ENCODE measurements at regions of chr3 and their contacts with region 1.

Region 1: GRCh38 chr3:354432-354831 is 157.9 kb downstream of the CHL1 start:
- DNase-seq: peak; percentile 64
- ATAC-seq: peak; percentile 59
- H3K4me3 ChIP-seq: no peak overlapping the region
- H3K27ac ChIP-seq: peak overlapping the region; percentile 46
- H3K4me1 ChIP-seq: peaks cover 16% of the 10 kb centered on the region
- H3K27me3 ChIP-seq: no peaks in the 10 kb centered on the region
- CTCF ChIP-seq: peak; percentile 69
- POLR2A ChIP-seq: no peak
- RAD21 ChIP-seq: peak; percentile 74

Region 2: DNA sequence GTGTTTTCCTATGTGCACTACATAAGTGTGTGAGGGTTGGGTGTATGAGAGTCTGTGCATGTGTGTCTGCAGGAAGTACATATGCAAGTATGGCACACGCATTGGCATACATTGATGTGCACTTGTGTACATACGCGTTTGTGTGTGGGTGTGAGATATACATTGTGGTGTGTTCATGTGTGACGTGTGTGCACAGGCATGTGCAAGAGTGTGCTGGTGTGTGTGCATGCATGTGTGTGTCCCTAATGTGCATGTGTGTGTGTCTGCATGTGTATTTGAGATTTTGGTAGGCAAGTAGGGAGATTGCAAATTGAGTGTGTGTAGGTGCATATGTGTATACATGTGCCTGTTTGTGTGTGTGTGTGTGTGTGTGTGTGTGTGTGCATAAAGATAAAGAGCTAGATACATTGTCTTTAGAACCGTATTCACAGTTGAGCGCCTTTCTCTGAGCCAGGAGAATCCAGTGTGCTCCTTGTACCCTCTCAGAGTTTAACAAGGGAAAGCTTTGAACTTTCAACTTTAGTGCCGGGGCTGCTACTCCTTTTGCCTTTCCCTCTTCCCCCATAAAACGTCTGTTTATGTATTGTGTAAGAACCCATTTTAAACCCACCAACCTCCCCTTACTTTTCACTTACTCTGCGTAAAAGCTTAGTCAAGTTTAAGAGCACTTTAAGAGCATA is 310.3 kb before region 1 on chr3:
- CTCF ChIA-PET with region 1: interaction called, 3 read pairs
- POLR2A ChIA-PET with region 1: no interaction called
- dilution Hi-C with region 1: no loop called
- in situ Hi-C with region 1: no loop called
- intact Hi-C with region 1: loop called (anchors 1 kb)
- DNase-seq: no peak
- ATAC-seq: no peak
- H3K4me3 ChIP-seq: no peak overlapping the region
- H3K27ac ChIP-seq: no peak overlapping the region
- H3K4me1 ChIP-seq: no peaks in the 10 kb centered on the region
- H3K27me3 ChIP-seq: no peaks in the 10 kb centered on the region
- CTCF ChIP-seq: no peak
- POLR2A ChIP-seq: no peak
- RAD21 ChIP-seq: no peak

Region 3: GRCh38 chr3:197828-198491 is 156.5 kb before region 1 on chr3:
- CTCF ChIA-PET with region 1: no interaction called
- POLR2A ChIA-PET with region 1: no interaction called
- dilution Hi-C with region 1: no loop called
- in situ Hi-C with region 1: no loop called
- intact Hi-C with region 1: loop called (anchors 1 kb)
- DNase-seq: no peak
- ATAC-seq: peak; percentile 61
- H3K4me3 ChIP-seq: peak overlapping the region; percentile 46
- H3K27ac ChIP-seq: no peak overlapping the region
- H3K4me1 ChIP-seq: no peaks in the 10 kb centered on the region
- H3K27me3 ChIP-seq: peaks cover 15% of the 10 kb centered on the region
- CTCF ChIP-seq: no peak
- POLR2A ChIP-seq: no peak
- RAD21 ChIP-seq: no peak

Region 4: DNA sequence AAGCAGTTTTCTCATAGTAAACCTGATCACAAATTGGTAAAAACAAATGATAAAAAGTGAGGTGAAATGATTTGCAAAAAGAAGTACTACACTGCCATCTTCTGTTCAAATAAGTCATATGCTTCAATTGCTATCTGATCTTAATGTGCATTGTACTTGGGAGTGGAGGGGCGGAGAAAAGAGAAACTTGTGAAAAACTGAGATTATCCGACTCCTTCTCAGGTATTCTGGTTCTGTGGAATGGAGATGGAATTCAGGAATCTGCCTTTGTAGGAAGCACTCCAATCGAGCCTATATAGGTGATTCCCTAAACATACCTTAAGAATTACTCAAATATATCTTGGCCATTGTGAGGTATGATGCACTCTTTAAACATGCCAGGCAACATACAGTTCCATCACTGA is 22.7 kb after region 1 on chr3:
- CTCF ChIA-PET with region 1: interaction called, 6 read pairs
- POLR2A ChIA-PET with region 1: no interaction called
- dilution Hi-C with region 1: no loop called
- in situ Hi-C with region 1: no loop called
- intact Hi-C with region 1: loop called (anchors 1 kb)
- DNase-seq: peak; percentile 63
- ATAC-seq: peak; percentile 89
- H3K4me3 ChIP-seq: peak overlapping the region; percentile 38; the same call in 1 of the 2 replicates
- H3K27ac ChIP-seq: no peak overlapping the region
- H3K4me1 ChIP-seq: no peaks in the 10 kb centered on the region
- H3K27me3 ChIP-seq: no peaks in the 10 kb centered on the region
- CTCF ChIP-seq: peak; percentile 57
- POLR2A ChIP-seq: no peak
- RAD21 ChIP-seq: peak; percentile 68